ENCODE measurements at regions of chr18 and their contacts with region 1.

Region 1: DNA sequence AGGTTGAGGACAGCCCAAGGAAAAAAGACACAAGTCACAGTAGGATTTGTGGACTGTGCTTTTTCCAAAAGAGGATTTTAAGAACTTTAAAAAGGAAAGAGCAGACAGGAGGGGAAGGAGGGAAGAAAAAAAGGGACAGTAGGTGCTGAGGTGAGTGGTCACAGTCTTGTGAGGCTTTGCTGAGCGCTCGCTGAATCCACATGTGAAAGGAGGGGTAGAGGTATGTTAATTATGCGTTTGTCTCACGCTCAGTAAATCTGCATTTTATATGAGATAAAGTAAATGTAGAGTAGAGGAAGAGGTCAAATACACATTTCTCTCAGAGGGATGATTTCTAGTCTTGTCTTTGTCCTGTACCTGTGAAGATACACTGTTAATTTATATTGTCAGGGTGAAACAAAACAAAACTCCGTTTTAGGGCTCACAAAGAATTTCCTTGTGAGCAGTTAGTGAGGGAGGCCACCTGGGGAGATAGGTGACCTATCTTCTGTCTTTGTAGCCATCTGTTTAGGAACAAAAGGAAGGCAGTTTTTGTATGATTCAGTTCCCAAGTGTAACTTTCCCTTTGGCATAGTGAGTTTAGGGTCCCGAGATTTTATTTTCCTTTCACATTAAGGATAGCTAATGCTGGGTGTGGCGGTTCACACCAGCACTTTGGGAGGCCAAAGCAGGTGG is 25.3 kb downstream of the GNAL start:
- DNase-seq: no peak
- H3K4me3 ChIP-seq: no peak overlapping the region
- CTCF ChIP-seq: no peak

Region 2: DNA sequence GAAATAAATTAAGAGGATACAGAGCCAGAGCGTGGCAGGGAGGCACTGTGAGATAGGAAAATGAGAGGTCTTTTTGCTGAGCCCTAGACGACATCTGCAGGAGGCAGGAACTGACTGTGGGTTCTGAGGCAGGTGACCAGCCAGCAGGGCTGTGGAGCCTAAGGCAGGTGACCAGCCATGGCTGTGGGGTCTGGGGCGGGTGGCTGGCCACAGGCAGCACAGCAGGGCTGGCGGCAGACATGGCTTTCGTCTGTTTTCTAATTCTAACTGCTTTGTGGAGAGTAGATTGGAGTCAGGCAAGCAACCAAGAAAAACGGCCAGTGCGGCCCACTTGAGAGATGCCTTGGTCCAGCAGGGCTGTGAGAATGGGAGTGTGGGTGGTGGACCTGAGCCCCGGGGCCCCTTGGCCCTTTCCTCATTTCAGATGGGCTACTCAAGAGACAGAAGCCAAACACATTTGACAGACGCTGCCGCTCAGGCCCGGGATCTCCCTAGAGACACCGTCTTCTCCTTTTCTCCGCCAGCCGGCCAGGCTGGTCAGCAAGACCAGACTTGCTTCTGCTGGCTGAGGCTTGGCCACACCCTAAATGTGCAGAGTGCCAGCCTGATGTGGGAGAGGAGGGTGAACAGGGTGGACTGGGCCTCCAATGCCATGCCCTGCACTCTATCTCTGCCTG is 45.0 kb before region 1 on chr18:
- in situ Hi-C with region 1: loop called (anchors 5 kb)
- DNase-seq: no peak
- H3K4me3 ChIP-seq: no peak overlapping the region
- CTCF ChIP-seq: no peak

Region 3: GRCh38 chr18:11789731-11790510 is 75.5 kb after region 1 on chr18:
- in situ Hi-C with region 1: loop called (anchors 5 kb)
- DNase-seq: no peak
- H3K4me3 ChIP-seq: no peak overlapping the region
- CTCF ChIP-seq: no peak

Region 4: GRCh38 chr18:11937874-11938478 is 223.6 kb after region 1 on chr18:
- in situ Hi-C with region 1: no loop called
- DNase-seq: peak; percentile 49
- H3K4me3 ChIP-seq: no peak overlapping the region
- CTCF ChIP-seq: peak; percentile 78

Measured in astrocyte of the cerebellum (primary cell).